Adrenal gland (tissue), 19 donors: ENCODE measurements at regions of chr17 and their contacts with region 1.

Region 1: DNA sequence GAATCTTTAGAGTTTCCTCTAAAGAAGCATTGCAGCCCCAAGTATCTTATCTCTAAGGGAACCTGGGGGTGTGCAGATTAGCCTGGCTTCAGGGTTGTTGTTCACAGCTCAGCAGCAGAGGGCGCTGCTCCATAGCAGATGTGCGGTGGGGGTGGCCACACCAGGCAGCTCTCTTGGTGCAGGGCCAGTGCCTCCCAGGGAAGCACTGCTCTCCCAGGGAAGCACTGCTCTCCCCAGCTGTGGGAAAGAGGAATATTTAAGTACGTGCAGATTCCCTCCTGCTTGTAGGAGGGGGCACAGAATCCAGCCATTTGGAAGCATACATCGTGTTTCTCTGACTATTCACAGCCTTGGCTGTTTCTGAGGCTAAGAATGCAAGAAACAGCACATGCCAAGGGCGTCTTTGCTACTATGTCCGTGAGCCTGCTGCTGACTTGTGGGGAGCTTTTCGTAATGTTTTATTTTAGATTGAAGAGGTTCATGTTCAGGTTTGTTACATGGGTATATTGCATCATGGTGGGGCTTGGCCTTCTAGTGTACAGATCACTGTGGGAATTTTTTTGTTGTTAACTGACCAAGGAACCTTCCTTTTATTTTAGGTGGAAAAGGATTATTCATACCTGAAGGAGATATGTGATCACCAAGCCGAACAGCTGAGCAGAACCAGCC is 217.8 kb downstream of the SPECC1 start:
- DNase-seq: peak; percentile 80 to 92 (median 88)
- H3K4me3 ChIP-seq: no peak overlapping the region
- H3K27ac ChIP-seq: no peak overlapping the region
- H3K4me1 ChIP-seq: peaks cover 0 to 7% of the 10 kb centered on the region in 2 donors
- H3K27me3 ChIP-seq: no peaks in the 10 kb centered on the region
- CTCF ChIP-seq: peak; percentile 70 to 95 (median 86)
- POLR2A ChIP-seq: no peak

Region 2: GRCh38 chr17:20121359-20122253 is 105.3 kb before region 1 on chr17:
- intact Hi-C with region 1: loop called (anchors 5 kb)
- DNase-seq: peak; percentile 48 to 80 (median 67)
- H3K4me3 ChIP-seq: no peak overlapping the region
- H3K27ac ChIP-seq: no peak overlapping the region
- H3K4me1 ChIP-seq: peaks cover 0 to 7% of the 10 kb centered on the region in 2 donors
- H3K27me3 ChIP-seq: no peaks in the 10 kb centered on the region
- CTCF ChIP-seq: peak; percentile 78 to 93 (median 84)
- POLR2A ChIP-seq: no peak

Region 3: DNA sequence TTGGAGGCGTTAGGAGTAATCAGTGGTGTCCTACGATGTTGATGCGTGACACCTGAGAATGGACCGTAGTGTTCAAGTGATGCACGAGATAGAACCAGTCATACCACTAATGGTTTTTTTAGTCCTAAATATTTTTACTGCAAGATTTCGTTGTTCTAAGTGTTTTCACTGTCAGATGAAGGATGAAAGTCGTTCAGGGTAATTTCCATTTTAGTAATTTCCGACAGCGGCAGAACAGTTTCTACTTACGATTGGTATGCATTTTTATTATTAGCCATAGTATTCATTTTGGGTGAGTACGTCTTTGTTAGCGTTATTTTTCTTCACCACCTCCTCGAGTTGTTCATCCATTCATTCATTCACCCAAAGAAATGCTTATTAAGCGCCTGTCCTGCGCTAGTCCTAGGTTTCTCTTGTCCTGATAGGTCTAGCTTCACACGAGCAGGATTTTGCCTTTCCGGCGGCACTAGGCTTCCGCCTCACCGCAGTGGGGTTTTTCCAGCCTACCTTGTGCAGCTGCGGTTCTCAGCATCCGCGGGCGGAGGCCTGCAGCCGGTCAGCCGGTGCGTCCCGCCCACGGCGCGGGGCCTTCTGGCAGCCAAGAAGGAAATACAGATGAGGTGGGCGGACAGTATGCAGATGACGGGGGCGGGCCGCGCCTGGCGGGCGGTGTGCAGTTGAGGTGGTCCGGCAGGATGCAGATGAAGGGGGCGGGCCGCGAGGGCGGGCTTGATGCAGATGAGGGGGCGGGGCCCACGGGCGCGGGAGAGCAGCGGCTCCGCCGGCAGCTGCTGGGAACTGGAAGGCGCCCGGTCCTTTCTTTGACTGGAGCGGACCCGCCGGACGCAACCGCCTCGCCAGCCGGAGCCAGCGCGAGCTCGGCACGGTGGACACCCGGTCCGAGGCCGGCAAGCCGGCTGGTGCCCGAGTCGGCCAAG is 71.4 kb before region 1 on chr17:
- intact Hi-C with region 1: no loop called
- DNase-seq: peak; percentile 98 to 100 (median 99)
- H3K4me3 ChIP-seq: peak overlapping the region in 3 of 4 donors; percentile 49 to 73 (median 62)
- H3K27ac ChIP-seq: peak overlapping the region in 4 of 5 donors; percentile 54 to 90 (median 67)
- H3K4me1 ChIP-seq: peaks cover 13 to 16% of the 10 kb centered on the region in 2 donors
- H3K27me3 ChIP-seq: no peaks in the 10 kb centered on the region
- CTCF ChIP-seq: peak in 2 of 6 experiments; percentile 8 to 11
- POLR2A ChIP-seq: peak; percentile 38 to 92

Region 4: DNA sequence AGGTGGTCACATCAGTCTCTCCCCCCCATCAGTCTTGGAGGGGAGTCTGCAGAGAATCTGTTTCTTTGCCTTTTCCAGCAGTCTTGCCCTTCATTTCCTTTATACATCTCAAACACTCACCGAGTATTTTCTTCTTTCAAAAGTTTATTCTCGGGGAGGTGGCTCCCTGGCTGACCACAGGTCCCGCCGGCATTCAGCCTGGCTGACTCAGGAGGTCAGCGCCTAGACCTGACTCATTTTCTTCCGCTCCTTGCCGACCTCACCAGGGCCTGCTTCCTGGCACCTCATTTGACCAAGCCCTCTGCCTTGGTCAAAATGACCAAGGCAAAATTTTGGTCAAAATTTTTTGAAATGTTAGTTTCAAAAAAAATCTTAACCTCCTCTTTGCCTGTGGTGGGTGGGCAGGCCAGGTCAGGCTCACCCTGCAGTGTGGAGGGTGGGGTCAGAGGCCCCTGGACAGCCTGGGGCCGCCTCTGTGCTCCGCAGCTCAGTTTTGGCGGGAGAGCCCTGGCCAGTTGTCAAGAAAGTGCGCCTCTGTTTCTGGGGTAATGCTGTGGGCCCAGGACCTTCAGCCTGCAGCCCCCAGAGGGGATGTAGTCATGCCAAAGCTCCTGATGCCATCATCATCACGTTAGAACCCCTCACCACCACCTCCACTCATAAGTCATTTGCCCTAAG is 52.2 kb before region 1 on chr17:
- intact Hi-C with region 1: loop called in 1 of 2 experiments (anchors 10 kb)
- DNase-seq: peak in 6 of 7 donors; percentile 50 to 73 (median 68)
- H3K4me3 ChIP-seq: no peak overlapping the region
- H3K27ac ChIP-seq: peak overlapping the region in 3 of 5 donors; percentile 52 to 72 (median 60)
- H3K4me1 ChIP-seq: peaks cover 6 to 16% of the 10 kb centered on the region in 2 donors
- H3K27me3 ChIP-seq: no peaks in the 10 kb centered on the region
- CTCF ChIP-seq: no peak
- POLR2A ChIP-seq: no peak

Region 5: GRCh38 chr17:20273741-20274500 is 47.0 kb after region 1 on chr17:
- intact Hi-C with region 1: no loop called
- DNase-seq: no peak
- H3K4me3 ChIP-seq: no peak overlapping the region
- H3K27ac ChIP-seq: no peak overlapping the region
- H3K4me1 ChIP-seq: no peaks in the 10 kb centered on the region
- H3K27me3 ChIP-seq: no peaks in the 10 kb centered on the region
- CTCF ChIP-seq: no peak
- POLR2A ChIP-seq: no peak

Region 6: DNA sequence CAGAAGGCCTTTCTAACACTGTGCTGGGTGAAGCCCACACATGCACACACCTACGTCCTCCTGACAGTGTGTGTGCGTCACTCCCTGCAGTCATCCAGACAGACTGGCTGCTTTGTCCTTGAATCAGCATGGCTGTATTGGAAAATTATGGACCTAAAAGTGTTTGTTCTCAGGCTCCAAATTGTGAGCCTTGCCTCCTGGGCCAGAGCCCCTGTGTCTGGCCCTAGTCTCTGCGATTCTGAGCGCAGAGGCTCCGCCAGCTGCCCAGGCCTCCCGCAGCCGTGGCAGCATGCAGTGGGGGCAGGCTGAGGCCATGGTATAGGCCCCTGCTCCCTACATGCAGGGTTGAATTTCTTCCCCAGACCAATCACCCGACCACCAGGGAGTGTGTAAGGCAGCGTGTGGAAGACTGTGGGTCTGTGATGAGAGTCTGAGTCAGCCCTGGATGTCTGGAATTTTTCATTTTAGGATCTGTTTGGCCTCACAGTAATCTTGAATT is 73.5 kb after region 1 on chr17:
- intact Hi-C with region 1: no loop called
- DNase-seq: peak in 3 of 7 donors; percentile 18 to 48 (median 37)
- H3K4me3 ChIP-seq: no peak overlapping the region
- H3K27ac ChIP-seq: no peak overlapping the region
- H3K4me1 ChIP-seq: no peaks in the 10 kb centered on the region
- H3K27me3 ChIP-seq: no peaks in the 10 kb centered on the region
- CTCF ChIP-seq: no peak
- POLR2A ChIP-seq: no peak

Region 7: DNA sequence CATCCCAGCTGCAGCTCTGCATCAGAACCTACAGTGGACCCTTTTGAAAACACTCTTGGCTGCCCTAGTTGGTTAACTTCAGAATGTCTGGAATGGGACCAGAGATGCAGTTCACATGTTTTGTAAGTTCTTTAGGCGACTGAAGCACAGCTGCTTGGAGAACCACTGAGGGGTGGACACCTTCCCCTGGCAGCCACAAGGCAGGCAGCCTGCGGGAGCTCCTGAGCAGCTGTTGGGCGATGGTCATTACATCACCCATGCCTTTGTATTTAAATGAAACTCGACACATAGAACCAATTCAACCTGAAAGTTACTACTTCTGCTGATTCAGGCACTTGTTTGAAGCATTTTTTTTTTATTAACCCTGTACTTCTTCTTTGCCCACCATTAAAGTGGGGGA is 88.9 kb after region 1 on chr17:
- intact Hi-C with region 1: loop called in 1 of 2 experiments (anchors 2 kb)
- DNase-seq: no peak
- H3K4me3 ChIP-seq: no peak overlapping the region
- H3K27ac ChIP-seq: no peak overlapping the region
- H3K4me1 ChIP-seq: no peaks in the 10 kb centered on the region
- H3K27me3 ChIP-seq: no peaks in the 10 kb centered on the region
- CTCF ChIP-seq: no peak
- POLR2A ChIP-seq: no peak